Activated T-helper 1 cell treated with anti-CD3 and anti-CD28 coated beads, Interleukin-12 subunit alpha, Interleukin-12 subunit beta, Interleukin-2, Interleukin-4 antibody, amounts not matched to agents 30 ng/mL and 10 ng/mL and 1 ng/mL, durations not matched to agents 14 hours and 24 hours and 36 hours (primary cell): ENCODE measurements at regions of chr2 and their contacts with region 1.

Region 1: GRCh38 chr2:26244309-26245121 is at the starts of genes HADHA and HADHB:
- DNase-seq: peak; percentile 76
- H3K4me3 Mint-ChIP-seq: peak within 1 kb of the TSS; percentile 98
- H3K27ac Mint-ChIP-seq: peak within 1 kb of the TSS; percentile 96
- H3K4me1 Mint-ChIP-seq: peaks cover 44% of the 10 kb centered on the region
- H3K27me3 Mint-ChIP-seq: peaks cover 8% of the 10 kb centered on the region
- total RNA-seq, gene HADHA: 96.8 and 99.9 TPM in 2 replicates
- total RNA-seq, gene HADHB: 78.8 and 78.9 TPM in 2 replicates

Region 2: GRCh38 chr2:26088032-26088643 is 156.4 kb before region 1 on chr2:
- intact Hi-C with region 1: loop called (anchors 10 kb)
- DNase-seq: no peak
- H3K4me3 Mint-ChIP-seq: no peak overlapping the region
- H3K27ac Mint-ChIP-seq: no peak overlapping the region
- H3K4me1 Mint-ChIP-seq: peaks cover 49% of the 10 kb centered on the region
- H3K27me3 Mint-ChIP-seq: no peaks in the 10 kb centered on the region

Region 3: DNA sequence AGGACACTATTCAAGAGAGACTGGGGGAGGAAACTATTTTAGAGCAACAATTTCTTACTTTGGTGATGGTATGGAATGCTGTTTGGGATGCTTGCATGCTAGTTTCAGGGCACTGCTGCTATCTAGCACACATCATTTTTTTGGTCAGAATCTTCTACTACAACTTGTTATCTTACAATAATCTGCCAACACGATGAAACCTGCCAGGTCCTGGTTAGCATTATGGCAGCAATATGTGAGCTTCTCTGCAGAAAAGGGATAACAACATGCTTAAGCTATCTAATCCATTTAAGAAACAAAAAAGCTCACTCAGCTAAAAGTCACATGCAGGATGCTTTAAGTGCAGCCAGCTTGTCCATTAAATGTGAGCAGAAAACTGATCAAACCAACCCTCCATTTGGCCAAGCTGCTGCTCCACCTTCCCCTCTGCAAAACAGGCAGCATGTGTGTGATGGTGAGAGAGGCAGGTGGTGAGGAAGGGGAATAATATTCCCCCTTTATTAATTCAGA is 41.5 kb before region 1 on chr2:
- intact Hi-C with region 1: no loop called
- DNase-seq: no peak
- H3K4me3 Mint-ChIP-seq: no peak overlapping the region
- H3K27ac Mint-ChIP-seq: no peak overlapping the region
- H3K4me1 Mint-ChIP-seq: no peaks in the 10 kb centered on the region
- H3K27me3 Mint-ChIP-seq: no peaks in the 10 kb centered on the region

Region 4: GRCh38 chr2:26299471-26300101 is 55.1 kb after region 1 on chr2:
- intact Hi-C with region 1: loop called (anchors 2 kb)
- DNase-seq: no peak
- H3K4me3 Mint-ChIP-seq: no peak overlapping the region
- H3K27ac Mint-ChIP-seq: no peak overlapping the region
- H3K4me1 Mint-ChIP-seq: no peaks in the 10 kb centered on the region
- H3K27me3 Mint-ChIP-seq: peaks cover 40% of the 10 kb centered on the region

Region 5: DNA sequence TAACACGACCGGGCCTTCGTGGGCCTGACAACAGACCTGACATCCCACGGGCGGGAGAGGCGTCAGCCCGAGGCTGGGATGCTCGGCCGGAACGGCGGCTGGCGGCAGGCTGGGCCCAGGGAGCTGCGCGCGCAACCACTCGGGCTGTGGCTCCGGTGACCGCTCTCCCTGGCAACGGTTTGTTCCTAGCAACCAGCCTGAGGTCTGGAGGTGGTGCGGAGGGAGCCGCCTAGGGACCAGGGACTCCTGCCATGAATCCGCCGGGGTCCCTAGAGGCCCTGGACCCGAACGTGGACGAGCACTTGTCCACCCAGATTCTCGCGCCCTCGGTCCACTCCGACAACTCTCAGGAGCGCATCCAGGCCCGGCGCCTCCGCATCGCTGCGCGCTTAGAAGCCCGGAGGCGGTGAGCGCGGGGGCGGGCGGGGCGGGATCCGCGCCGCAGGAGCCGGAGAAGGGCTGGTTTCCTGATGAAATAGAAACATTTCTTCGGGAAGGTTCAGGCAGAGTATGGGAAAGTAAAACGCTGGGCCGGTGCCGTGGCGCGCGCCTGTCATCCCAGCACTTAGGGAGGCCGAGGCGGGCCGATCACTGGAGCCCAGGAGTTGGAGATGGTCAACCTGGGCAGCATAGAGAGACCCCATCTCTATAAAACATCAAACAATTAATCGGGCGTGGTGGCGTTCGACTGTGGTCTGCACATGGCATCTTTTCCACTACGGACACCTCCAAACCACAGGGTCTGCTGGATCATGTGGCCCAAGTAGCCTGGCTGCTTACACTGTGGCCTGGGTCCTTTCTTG is 157.4 kb after region 1 on chr2 and contains the start of gene DRC1:
- intact Hi-C with region 1: loop called (anchors 5 kb)
- DNase-seq: peak; percentile 31
- H3K4me3 Mint-ChIP-seq: no peak within 1 kb of the TSS
- H3K27ac Mint-ChIP-seq: no peak within 1 kb of the TSS
- H3K4me1 Mint-ChIP-seq: peaks cover 14% of the 10 kb centered on the region
- H3K27me3 Mint-ChIP-seq: peaks cover 2% of the 10 kb centered on the region
- total RNA-seq, gene DRC1: not detected in 2 replicates

Region 6: GRCh38 chr2:26785431-26786206 is 541.1 kb after region 1 on chr2 and contains the start of gene CENPA:
- intact Hi-C with region 1: loop called (anchors 10 kb)
- DNase-seq: peak; percentile 94
- H3K4me3 Mint-ChIP-seq: peak within 1 kb of the TSS; percentile 96
- H3K27ac Mint-ChIP-seq: peak within 1 kb of the TSS; percentile 89
- H3K4me1 Mint-ChIP-seq: peaks cover 33% of the 10 kb centered on the region
- H3K27me3 Mint-ChIP-seq: no peaks in the 10 kb centered on the region
- total RNA-seq, gene CENPA: 16.6 and 19.7 TPM in 2 replicates